MCF 10A (cell line): ENCODE measurements at regions of chr16 and their contacts with region 1.

Region 1: GRCh38 chr16:70267516-70267915 is 15.8 kb upstream of the EXOSC6 start:
- DNase-seq: peak; percentile 62
- H3K4me3 Mint-ChIP-seq: no peak overlapping the region
- H3K27ac Mint-ChIP-seq: no peak overlapping the region
- H3K4me1 Mint-ChIP-seq: no peaks in the 10 kb centered on the region
- H3K27me3 Mint-ChIP-seq: no peaks in the 10 kb centered on the region
- CTCF ChIP-seq: peak; percentile 39

Region 2: DNA sequence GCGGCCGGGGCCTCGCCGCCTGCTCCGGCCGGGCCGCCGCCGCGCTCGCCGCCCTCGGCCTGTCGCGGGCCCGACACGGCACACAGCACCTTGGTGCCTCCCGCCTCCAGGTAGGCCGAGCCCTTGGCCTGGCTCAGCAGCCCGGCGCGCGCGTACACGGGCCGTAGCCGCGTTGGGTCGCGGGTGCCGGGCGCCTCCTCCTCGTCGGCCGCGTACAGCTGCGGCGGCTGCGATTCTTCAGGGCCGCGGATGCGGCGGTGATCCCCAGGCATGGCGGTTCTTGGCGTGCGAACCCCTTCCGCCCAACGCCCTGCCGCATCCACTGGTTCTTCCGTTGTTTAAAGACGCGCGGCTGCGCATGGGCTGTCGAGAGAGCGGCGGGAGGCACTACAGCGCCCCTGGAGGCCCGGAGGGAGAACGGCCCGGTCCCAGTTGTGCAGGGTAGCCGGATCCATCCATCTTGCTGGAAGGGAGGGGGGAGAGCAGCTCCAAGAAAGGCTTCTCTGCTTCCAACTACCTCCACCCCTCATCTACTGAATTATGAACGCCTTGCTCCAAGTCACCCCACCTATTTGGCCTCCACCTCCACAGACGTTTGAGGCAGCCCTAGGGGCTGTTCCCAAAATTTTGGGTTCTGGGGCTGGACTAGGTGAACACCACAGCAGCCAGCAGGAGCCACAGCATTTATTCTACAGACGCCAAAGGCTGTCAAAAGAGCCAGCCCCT is 15.7 kb before region 1 on chr16 and contains the start of gene EXOSC6:
- CTCF ChIA-PET with region 1: interaction called, 11 read pairs
- POLR2A ChIA-PET with region 1: interaction called, 3 read pairs
- intact Hi-C with region 1: no loop called
- DNase-seq: peak; percentile 93
- H3K4me3 Mint-ChIP-seq: peak within 1 kb of the TSS; percentile 79
- H3K27ac Mint-ChIP-seq: peak within 1 kb of the TSS; percentile 83
- H3K4me1 Mint-ChIP-seq: no peaks in the 10 kb centered on the region
- H3K27me3 Mint-ChIP-seq: no peaks in the 10 kb centered on the region
- CTCF ChIP-seq: peak; percentile 90
- total RNA-seq, gene EXOSC6: 49.8 and 83.9 TPM in 2 replicates

Region 3: DNA sequence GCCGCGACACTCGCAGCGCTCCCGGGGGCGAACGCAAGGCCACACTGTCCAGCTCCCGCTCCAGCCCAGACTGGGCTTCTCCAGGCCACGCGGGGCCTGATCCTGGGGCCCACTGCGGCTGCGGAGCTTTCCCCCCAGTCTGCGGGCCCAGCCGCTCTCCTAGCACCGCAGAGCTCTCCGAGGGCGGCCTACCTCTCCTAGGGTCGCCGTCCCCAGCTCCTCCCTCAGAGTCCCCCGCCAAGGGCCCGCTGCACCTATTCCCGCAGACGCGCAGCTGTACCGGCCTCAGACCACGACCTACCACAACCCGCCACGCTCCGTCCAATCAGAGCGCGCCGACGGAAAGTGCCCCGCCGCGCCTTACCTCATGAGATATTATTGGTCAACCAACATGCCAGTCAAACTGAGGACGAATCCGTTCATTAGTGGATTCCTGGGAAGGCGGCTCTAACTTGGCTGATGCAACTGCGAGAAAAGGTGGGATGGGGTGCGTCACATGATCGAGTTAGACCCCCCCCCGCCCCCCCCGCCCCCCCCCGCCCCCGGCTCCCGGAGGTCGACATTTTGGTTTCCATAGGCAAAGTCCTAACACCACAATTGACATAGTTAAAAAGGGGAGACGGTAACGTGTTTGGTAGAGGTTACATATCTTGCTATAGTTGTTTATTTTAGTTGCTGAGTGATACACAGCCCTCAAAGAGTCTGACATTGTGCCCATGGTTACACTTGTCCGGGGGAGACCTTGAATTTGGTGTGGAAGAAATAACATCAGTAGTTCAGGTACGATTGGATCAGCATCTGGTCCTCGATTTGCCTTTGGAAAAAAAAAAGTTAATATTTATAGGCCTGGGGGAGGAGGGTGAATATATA is 21.9 kb after region 1 on chr16 and contains the start of gene AARS1:
- CTCF ChIA-PET with region 1: interaction called, 12 read pairs
- POLR2A ChIA-PET with region 1: no interaction called
- intact Hi-C with region 1: no loop called
- DNase-seq: peak; percentile 100
- H3K4me3 Mint-ChIP-seq: peak within 1 kb of the TSS; percentile 86
- H3K27ac Mint-ChIP-seq: peak within 1 kb of the TSS; percentile 94
- H3K4me1 Mint-ChIP-seq: peaks cover 6% of the 10 kb centered on the region
- H3K27me3 Mint-ChIP-seq: no peaks in the 10 kb centered on the region
- CTCF ChIP-seq: no peak
- total RNA-seq, gene AARS1: 314 and 390 TPM in 2 replicates

Region 4: GRCh38 chr16:70324998-70325747 is 57.7 kb after region 1 on chr16:
- CTCF ChIA-PET with region 1: no interaction called
- POLR2A ChIA-PET with region 1: no interaction called
- intact Hi-C with region 1: no loop called
- DNase-seq: no peak
- H3K4me3 Mint-ChIP-seq: no peak overlapping the region
- H3K27ac Mint-ChIP-seq: no peak overlapping the region
- H3K4me1 Mint-ChIP-seq: peaks cover 6% of the 10 kb centered on the region
- H3K27me3 Mint-ChIP-seq: no peaks in the 10 kb centered on the region
- CTCF ChIP-seq: no peak

Region 5: GRCh38 chr16:70364399-70364798 is 96.9 kb after region 1 on chr16:
- CTCF ChIA-PET with region 1: no interaction called
- POLR2A ChIA-PET with region 1: no interaction called
- intact Hi-C with region 1: no loop called
- DNase-seq: no peak
- H3K4me3 Mint-ChIP-seq: no peak overlapping the region
- H3K27ac Mint-ChIP-seq: no peak overlapping the region
- H3K4me1 Mint-ChIP-seq: no peaks in the 10 kb centered on the region
- H3K27me3 Mint-ChIP-seq: no peaks in the 10 kb centered on the region
- CTCF ChIP-seq: no peak

Region 6: DNA sequence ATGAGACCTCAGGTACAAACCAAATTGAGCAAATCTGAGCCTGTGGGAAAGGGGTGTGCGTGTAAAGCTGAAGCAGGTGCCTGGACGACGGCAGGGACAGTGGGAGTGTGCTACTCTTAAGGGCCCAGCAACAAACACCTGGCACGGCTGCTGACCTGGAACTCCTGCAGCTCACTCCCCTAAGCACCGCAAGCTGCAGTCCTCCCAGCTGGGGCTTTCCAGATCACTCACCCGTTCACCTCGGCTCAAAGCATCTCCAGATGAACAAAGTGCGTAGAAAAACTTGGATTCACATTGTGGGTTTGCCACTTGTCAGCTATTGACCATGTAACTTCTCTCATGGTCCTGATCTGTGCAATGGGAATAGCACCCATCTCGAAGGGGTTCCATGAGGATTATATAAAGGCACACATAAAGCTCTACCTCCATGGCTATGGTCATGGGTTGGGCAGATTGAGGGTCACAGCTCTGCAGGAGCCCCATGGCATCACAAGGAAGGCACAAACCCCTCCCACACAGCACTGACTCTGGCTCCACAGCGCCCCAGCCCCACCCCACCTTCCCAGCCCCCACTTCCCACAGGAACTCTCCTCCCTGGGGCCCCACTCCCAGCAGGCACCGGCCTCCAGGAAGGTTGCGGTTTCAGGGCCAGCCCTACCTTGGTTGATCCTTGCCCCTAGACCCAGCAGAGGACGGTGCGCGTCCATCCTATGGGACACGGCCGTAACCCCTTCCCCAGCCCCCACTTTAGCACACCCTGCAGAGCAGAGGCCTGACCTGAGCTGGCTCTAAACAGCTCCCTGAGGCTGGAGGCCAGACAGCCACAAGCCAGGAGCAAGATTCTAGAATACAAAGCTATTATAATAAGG is 149.5 kb after region 1 on chr16:
- CTCF ChIA-PET with region 1: no interaction called
- POLR2A ChIA-PET with region 1: no interaction called
- intact Hi-C with region 1: no loop called
- DNase-seq: no peak
- H3K4me3 Mint-ChIP-seq: no peak overlapping the region
- H3K27ac Mint-ChIP-seq: peak overlapping the region; percentile 44
- H3K4me1 Mint-ChIP-seq: no peaks in the 10 kb centered on the region
- H3K27me3 Mint-ChIP-seq: no peaks in the 10 kb centered on the region
- CTCF ChIP-seq: no peak

Region 7: GRCh38 chr16:70523076-70523742 is 255.7 kb after region 1 on chr16 and contains the start of gene COG4:
- CTCF ChIA-PET with region 1: no interaction called
- POLR2A ChIA-PET with region 1: no interaction called
- intact Hi-C with region 1: no loop called
- DNase-seq: peak; percentile 87
- H3K4me3 Mint-ChIP-seq: peak within 1 kb of the TSS; percentile 98
- H3K27ac Mint-ChIP-seq: peak within 1 kb of the TSS; percentile 97
- H3K4me1 Mint-ChIP-seq: peaks cover 20% of the 10 kb centered on the region
- H3K27me3 Mint-ChIP-seq: no peaks in the 10 kb centered on the region
- CTCF ChIP-seq: no peak
- total RNA-seq, gene COG4: 62.2 and 64.9 TPM in 2 replicates